Ascending aorta (tissue), 2 donors: ENCODE measurements at regions of chr1 and their contacts with region 1.

Region 1: GRCh38 chr1:26161415-26162219 is 2.7 kb downstream of the FAM110D start:
- DNase-seq: peak in 1 of 2 donors; percentile 77
- H3K4me3 ChIP-seq: peak overlapping the region; percentile 59 to 76
- H3K27ac ChIP-seq: peak overlapping the region in 1 of 2 donors; percentile 2
- H3K4me1 ChIP-seq: peaks cover 6 to 8% of the 10 kb centered on the region in 2 donors
- H3K27me3 ChIP-seq: no peaks in the 10 kb centered on the region
- CTCF ChIP-seq: peak in 1 of 3 experiments; percentile 20

Region 2: GRCh38 chr1:24642481-24643361 is 1518.9 kb before region 1 on chr1 and contains the start of gene SRRM1:
- intact Hi-C with region 1: loop called (anchors 5 kb)
- DNase-seq: peak; percentile 98 to 100
- H3K4me3 ChIP-seq: peak within 1 kb of the TSS; percentile 73 to 88
- H3K27ac ChIP-seq: peak within 1 kb of the TSS; percentile 95 to 100
- H3K4me1 ChIP-seq: peaks cover 8 to 15% of the 10 kb centered on the region in 2 donors
- H3K27me3 ChIP-seq: no peaks in the 10 kb centered on the region
- CTCF ChIP-seq: peak in 2 of 3 experiments; percentile 10
- total RNA-seq, gene SRRM1: 90.5 TPM

Region 3: GRCh38 chr1:26035959-26036755 is 125.5 kb before region 1 on chr1:
- intact Hi-C with region 1: loop called (anchors 5 kb)
- DNase-seq: peak; percentile 20 to 87
- H3K4me3 ChIP-seq: peak overlapping the region; percentile 62 to 92
- H3K27ac ChIP-seq: peak overlapping the region; percentile 62 to 75
- H3K4me1 ChIP-seq: peaks cover 3 to 8% of the 10 kb centered on the region in 2 donors
- H3K27me3 ChIP-seq: no peaks in the 10 kb centered on the region
- CTCF ChIP-seq: peak; percentile 97 to 100 (median 100)

Region 4: GRCh38 chr1:26102526-26102925 is 59.1 kb before region 1 on chr1:
- intact Hi-C with region 1: loop called (anchors 1 kb)
- DNase-seq: peak in 1 of 2 donors; percentile 7
- H3K4me3 ChIP-seq: no peak overlapping the region
- H3K27ac ChIP-seq: no peak overlapping the region
- H3K4me1 ChIP-seq: no peaks in the 10 kb centered on the region
- H3K27me3 ChIP-seq: no peaks in the 10 kb centered on the region
- CTCF ChIP-seq: no peak

Region 5: GRCh38 chr1:26111530-26112406 is 49.8 kb before region 1 on chr1 and contains the start of gene PDIK1L:
- intact Hi-C with region 1: loop called (anchors 1 kb)
- DNase-seq: peak; percentile 61 to 95
- H3K4me3 ChIP-seq: peak within 1 kb of the TSS; percentile 92 to 100
- H3K27ac ChIP-seq: peak within 1 kb of the TSS; percentile 89 to 90
- H3K4me1 ChIP-seq: peaks cover 0 to 16% of the 10 kb centered on the region in 2 donors
- H3K27me3 ChIP-seq: no peaks in the 10 kb centered on the region
- CTCF ChIP-seq: no peak
- total RNA-seq, gene PDIK1L: 4.0 TPM

Region 6: GRCh38 chr1:26190373-26190987 is 28.9 kb after region 1 on chr1 and contains the start of gene CATSPER4:
- intact Hi-C with region 1: no loop called
- DNase-seq: no peak
- H3K4me3 ChIP-seq: no peak within 1 kb of the TSS
- H3K27ac ChIP-seq: no peak within 1 kb of the TSS
- H3K4me1 ChIP-seq: no peaks in the 10 kb centered on the region
- H3K27me3 ChIP-seq: no peaks in the 10 kb centered on the region
- CTCF ChIP-seq: no peak
- total RNA-seq, gene CATSPER4: not detected